Prostate gland (tissue), 2 donors: ENCODE measurements at regions of chr3 and their contacts with region 1.

Region 1: GRCh38 chr3:194315088-194315964 is 35.8 kb downstream of the CPN2 start:
- DNase-seq: peak; percentile 72
- H3K4me3 ChIP-seq: peak overlapping the region; percentile 31 to 40
- H3K27ac ChIP-seq: peak overlapping the region; percentile 33 to 57
- H3K4me1 ChIP-seq: no peaks in the 10 kb centered on the region
- H3K27me3 ChIP-seq: no peaks in the 10 kb centered on the region
- CTCF ChIP-seq: peak; percentile 80 to 96 (median 96)
- POLR2A ChIP-seq: peak; percentile 28

Region 2: GRCh38 chr3:193665370-193665989 is 649.8 kb before region 1 on chr3:
- intact Hi-C with region 1: loop called (anchors 5 kb)
- DNase-seq: no peak
- H3K4me3 ChIP-seq: no peak overlapping the region
- H3K27ac ChIP-seq: no peak overlapping the region
- H3K4me1 ChIP-seq: no peaks in the 10 kb centered on the region
- H3K27me3 ChIP-seq: no peaks in the 10 kb centered on the region
- CTCF ChIP-seq: peak in 3 of 4 experiments; percentile 34 to 52 (median 49)
- POLR2A ChIP-seq: no peak

Region 3: DNA sequence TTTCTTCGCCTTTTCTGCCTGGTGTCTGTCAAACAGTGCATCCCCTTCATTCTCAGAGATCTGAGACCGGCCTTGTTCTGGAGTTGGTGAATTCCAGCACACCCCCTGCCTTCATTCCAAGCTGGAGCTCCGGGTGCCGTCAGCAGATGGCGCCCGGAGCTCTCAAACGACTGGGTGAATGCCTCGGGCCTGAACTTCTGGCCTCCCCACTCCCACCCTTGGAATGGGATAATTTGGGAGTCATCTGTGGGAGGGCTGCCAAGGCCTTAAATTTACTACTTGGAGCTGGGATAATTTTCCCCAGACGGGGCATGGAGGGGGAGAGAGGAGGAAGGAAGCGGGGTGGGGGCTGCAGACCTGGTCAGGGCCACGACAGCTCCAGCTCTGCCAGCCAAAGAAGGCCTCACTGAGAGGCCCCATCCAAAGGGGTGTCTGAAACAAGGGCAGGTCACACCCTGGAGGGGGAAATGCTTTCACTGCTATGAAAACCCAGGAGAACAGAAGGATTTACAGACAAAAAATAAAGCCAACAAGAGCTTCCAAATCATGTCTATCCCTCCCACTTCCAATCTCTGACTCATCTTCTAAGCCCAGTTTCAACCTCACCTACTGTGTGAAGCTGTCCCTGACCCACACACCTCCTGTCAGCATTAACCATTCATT is 534.4 kb before region 1 on chr3:
- intact Hi-C with region 1: loop called (anchors 1 kb)
- DNase-seq: peak; percentile 59
- H3K4me3 ChIP-seq: no peak overlapping the region
- H3K27ac ChIP-seq: peak overlapping the region in 1 of 2 donors; percentile 10
- H3K4me1 ChIP-seq: no peaks in the 10 kb centered on the region
- H3K27me3 ChIP-seq: no peaks in the 10 kb centered on the region
- CTCF ChIP-seq: peak; percentile 79 to 86 (median 82)
- POLR2A ChIP-seq: no peak

Region 4: DNA sequence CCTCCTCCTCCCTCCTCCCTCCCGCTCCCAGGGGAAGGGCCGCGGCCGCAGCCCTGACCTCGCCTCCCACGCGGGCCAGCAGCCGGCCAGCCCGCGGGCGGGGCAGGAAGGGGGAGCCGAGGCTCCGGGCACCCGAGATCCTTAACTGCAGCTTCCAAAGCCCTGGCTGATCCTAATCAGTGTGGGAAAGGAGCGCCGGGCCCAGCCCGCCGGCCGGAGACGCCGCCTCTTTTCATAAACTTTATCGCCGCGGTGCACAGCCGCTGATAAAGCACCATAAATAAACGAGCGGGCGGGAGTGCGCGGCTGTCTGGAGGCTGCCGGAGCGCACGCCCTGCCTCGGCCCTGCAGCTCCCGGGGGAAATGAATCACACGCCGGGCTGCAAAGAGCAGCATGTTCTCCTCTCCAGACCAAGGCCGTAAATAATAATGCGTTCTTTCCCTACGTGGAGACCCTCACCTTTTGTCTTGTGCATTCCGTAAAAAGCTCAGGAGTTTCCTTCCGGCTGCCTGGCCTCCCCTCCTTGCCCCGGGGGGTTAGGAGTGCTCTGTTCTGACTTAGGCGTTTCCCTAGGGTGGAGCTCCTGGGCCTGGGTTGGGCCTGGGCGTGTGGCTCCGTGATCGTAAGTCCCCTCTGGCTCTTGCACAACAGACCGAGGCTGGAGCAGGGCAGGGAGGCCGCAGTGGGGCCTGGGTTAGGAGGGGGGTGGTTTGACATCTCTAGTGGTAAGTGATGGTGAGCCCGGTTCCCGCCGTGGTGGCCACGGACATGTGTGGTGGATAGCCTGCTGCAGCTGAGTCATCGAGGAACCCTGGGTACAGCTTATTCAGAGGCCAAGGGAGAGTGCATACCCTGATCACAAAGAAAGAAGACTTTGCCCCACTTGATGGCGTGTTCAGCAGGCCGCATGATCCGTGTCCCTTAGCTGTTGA is 311.9 kb before region 1 on chr3:
- intact Hi-C with region 1: loop called (anchors 2 kb)
- DNase-seq: peak; percentile 83
- H3K4me3 ChIP-seq: peak overlapping the region; percentile 23 to 31
- H3K27ac ChIP-seq: peak overlapping the region; percentile 78
- H3K4me1 ChIP-seq: peaks cover 7% of the 10 kb centered on the region
- H3K27me3 ChIP-seq: no peaks in the 10 kb centered on the region
- CTCF ChIP-seq: peak in 1 of 4 experiments; percentile 5
- POLR2A ChIP-seq: peak; percentile 10

Region 5: GRCh38 chr3:194070634-194071409 is 244.5 kb before region 1 on chr3:
- intact Hi-C with region 1: loop called (anchors 5 kb)
- DNase-seq: peak; percentile 89
- H3K4me3 ChIP-seq: peak overlapping the region; percentile 46
- H3K27ac ChIP-seq: peak overlapping the region; percentile 67 to 80
- H3K4me1 ChIP-seq: no peaks in the 10 kb centered on the region
- H3K27me3 ChIP-seq: no peaks in the 10 kb centered on the region
- CTCF ChIP-seq: peak in 2 of 4 experiments; percentile 25 to 29
- POLR2A ChIP-seq: no peak

Region 6: GRCh38 chr3:194134757-194135528 is 180.4 kb before region 1 on chr3:
- intact Hi-C with region 1: loop called (anchors 2 kb)
- DNase-seq: peak; percentile 95
- H3K4me3 ChIP-seq: peak overlapping the region; percentile 60 to 71
- H3K27ac ChIP-seq: peak overlapping the region; percentile 97 to 98
- H3K4me1 ChIP-seq: peaks cover 4% of the 10 kb centered on the region
- H3K27me3 ChIP-seq: no peaks in the 10 kb centered on the region
- CTCF ChIP-seq: peak in 1 of 4 experiments; percentile 21
- POLR2A ChIP-seq: peak; percentile 37

Region 7: DNA sequence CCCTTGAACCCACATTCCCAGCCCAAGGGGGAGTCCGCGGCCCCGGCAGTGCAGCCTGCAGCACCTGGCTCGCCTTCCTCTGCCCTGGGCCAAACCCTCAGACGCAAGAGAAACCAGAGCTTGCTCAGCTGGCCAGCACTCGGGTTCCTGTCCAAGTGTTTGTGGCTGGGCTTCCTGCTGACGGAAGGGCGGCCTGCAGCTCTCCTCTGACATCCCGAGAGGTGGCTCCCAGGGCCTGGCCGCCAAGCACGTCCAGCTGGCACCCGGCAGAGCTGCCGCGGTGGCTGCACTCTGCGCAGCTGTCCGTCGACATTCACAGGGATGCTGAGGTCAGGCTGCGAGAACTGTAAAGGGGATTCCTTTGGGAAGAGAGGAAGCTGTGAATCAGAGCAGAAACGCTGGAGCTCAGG is 49.8 kb before region 1 on chr3:
- intact Hi-C with region 1: loop called (anchors 5 kb)
- DNase-seq: peak; percentile 74
- H3K4me3 ChIP-seq: no peak overlapping the region
- H3K27ac ChIP-seq: peak overlapping the region; percentile 31 to 48
- H3K4me1 ChIP-seq: peaks cover 10% of the 10 kb centered on the region
- H3K27me3 ChIP-seq: no peaks in the 10 kb centered on the region
- CTCF ChIP-seq: no peak
- POLR2A ChIP-seq: peak; percentile 23